ENCODE measurements at regions of chr2 and their contacts with region 1.

Region 1: GRCh38 chr2:237085248-237086221 is at the start of gene COPS8:
- DNase-seq: peak; percentile 93
- H3K4me3 Mint-ChIP-seq: peak within 1 kb of the TSS; percentile 97
- H3K27ac Mint-ChIP-seq: peak within 1 kb of the TSS; percentile 89
- H3K4me1 Mint-ChIP-seq: peaks cover 24% of the 10 kb centered on the region
- H3K27me3 Mint-ChIP-seq: no peaks in the 10 kb centered on the region
- total RNA-seq, gene COPS8: 67.8 to 69.2 TPM

Region 2: DNA sequence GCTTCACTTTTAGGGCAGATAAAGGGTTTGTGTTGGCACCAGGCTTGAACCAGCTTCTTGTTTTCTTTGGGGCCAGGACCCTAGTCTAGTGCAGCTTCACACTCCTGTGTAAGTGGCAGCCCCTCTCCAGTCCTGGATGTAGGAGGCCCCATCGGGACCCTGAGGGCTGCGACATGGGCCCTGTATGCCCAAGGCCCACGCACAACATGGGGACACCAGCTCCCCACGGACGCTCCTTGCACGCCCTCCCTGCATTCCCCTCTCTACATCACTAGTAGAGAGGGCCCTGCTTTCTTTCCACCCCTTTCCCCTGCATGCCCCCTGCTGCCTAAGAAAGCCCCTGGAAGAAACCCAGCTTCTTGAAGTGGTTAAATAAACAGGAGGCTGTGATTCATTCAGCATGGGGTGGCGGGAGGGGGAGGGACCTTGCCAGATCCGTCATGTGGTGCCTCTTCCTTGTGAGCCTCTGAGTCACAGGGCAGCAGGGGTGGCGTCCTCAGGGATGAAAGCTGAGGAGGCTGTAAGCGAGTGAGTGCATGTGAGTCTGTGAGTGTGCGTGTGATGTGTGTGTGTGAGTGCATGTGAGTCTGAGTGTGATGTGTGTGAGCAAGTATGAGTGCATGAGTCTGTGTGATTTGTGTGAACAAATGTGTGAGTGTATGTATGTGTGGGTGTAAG is 42.6 kb after region 1 on chr2:
- CTCF ChIA-PET with region 1: no interaction called
- intact Hi-C with region 1: loop called (anchors 2 kb)
- DNase-seq: peak; percentile 86
- H3K4me3 Mint-ChIP-seq: no peak overlapping the region
- H3K27ac Mint-ChIP-seq: no peak overlapping the region
- H3K4me1 Mint-ChIP-seq: no peaks in the 10 kb centered on the region
- H3K27me3 Mint-ChIP-seq: no peaks in the 10 kb centered on the region

Measured in activated naive CD4-positive, alpha-beta T cell treated with anti-CD3 and anti-CD28 coated beads for 36 hours (primary cell).